ENCODE measurements at regions of chr17 and their contacts with region 1.

Region 1: DNA sequence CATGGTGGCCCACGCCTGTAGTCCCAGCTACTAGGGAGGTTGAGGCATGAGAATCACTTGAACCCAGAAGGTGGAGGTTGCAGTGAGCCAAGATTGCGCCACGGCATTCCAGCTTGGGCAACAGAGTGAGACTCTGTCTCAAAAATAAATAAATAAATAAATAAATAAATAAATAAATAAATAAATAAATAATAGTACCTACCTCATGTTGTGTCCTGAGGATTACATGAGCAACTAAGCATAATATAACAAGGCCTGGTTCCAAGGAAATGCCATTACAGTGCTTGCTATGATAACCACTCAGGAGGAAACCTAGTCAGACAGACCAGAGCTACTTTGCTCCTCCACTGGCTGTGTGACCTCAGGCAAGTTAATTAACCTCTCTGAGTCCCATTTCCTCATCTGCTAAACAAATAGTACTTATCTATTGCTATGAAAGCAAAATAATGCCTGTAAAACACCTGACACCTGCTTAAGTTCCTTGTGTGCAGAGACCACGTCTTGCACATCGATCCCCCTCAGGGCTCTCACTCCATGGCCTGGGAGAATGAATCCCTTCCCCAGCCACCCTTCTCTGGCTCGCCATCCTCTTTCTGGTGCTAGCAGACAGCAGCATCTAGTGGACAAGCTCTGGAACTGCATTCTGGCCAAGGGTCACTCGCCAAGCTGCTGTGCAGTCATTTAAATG is 7.5 kb downstream of the EPOP start:
- DNase-seq: no peak
- H3K4me3 ChIP-seq: no peak overlapping the region
- H3K27ac ChIP-seq: no peak overlapping the region
- H3K4me1 ChIP-seq: no peaks in the 10 kb centered on the region
- H3K27me3 ChIP-seq: no peaks in the 10 kb centered on the region
- CTCF ChIP-seq: peak; percentile 81 to 96 (median 95)
- POLR2A ChIP-seq: no peak

Region 2: DNA sequence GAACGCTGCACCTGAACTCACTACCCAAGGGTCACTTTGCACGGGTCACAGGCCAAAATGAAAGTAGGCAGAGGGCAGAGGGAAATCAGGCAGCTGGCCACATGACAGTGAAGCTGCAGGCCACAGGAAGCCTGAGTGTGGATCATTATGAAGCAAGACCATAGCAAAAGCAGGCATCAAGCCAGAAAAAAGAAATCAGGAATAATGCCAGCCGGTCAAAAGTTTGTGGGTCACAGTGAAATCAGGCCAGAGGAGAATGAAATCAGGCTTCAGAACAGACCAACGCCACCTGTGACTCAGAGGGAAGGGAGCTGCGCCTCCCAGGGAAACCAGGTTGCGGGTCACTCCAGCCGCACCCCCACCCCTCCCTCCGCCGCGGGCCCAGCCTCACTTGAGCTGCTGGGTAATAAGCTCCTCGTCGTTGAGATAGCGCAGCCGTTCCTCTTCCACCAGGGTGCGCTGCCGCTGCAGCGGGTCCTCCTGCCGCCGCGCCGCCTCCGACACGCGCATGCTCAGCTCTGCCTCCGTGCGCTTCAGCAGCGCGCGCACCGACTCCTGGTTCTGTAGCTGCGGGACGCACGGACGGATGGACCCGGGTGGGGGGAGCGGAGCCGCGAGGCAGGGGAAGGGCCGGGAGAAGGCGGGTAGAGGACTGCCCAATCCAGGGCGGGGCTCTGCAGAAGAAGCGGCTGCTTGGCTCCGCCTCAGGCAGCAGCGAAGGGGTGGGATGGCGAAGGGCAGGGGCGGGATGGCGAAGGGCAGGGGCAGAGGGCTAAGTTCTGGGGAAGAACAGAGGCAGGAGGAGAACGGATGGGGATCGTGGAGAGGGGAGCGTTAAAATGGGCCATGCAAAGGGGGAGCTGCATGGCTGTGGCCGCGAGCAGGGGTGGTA is 109.2 kb before region 1 on chr17:
- intact Hi-C with region 1: loop called (anchors 5 kb)
- DNase-seq: peak in 1 of 2 donors; percentile 93
- H3K4me3 ChIP-seq: peak overlapping the region; percentile 52
- H3K27ac ChIP-seq: peak overlapping the region; percentile 69
- H3K4me1 ChIP-seq: peaks cover 31% of the 10 kb centered on the region
- H3K27me3 ChIP-seq: peaks cover 11% of the 10 kb centered on the region
- CTCF ChIP-seq: peak; percentile 78 to 94 (median 80)
- POLR2A ChIP-seq: peak in 1 of 2 donors; percentile 27

Region 3: DNA sequence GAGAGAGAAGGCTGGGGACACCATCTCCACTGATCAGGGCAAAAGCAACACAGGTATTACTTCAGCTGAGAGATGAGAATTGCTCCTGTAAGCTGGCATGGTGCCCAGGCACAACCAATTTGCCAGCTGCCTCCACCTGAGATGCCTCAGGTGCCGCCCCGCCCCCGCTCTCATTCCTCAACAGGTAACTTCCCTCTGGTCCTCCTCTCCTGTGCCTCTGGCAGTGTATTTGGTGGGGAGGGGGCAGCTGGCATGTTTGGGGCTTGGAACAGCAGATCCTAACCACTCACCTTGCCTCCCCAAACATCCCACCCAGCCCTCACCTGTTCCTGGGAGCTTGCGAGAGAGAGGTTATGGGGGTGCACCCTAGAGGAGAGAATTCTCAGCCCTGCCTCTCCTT is 58.6 kb before region 1 on chr17:
- intact Hi-C with region 1: no loop called
- DNase-seq: no peak
- H3K4me3 ChIP-seq: no peak overlapping the region
- H3K27ac ChIP-seq: no peak overlapping the region
- H3K4me1 ChIP-seq: peaks cover 19% of the 10 kb centered on the region
- H3K27me3 ChIP-seq: peaks cover 16% of the 10 kb centered on the region
- CTCF ChIP-seq: no peak
- POLR2A ChIP-seq: no peak

Region 4: DNA sequence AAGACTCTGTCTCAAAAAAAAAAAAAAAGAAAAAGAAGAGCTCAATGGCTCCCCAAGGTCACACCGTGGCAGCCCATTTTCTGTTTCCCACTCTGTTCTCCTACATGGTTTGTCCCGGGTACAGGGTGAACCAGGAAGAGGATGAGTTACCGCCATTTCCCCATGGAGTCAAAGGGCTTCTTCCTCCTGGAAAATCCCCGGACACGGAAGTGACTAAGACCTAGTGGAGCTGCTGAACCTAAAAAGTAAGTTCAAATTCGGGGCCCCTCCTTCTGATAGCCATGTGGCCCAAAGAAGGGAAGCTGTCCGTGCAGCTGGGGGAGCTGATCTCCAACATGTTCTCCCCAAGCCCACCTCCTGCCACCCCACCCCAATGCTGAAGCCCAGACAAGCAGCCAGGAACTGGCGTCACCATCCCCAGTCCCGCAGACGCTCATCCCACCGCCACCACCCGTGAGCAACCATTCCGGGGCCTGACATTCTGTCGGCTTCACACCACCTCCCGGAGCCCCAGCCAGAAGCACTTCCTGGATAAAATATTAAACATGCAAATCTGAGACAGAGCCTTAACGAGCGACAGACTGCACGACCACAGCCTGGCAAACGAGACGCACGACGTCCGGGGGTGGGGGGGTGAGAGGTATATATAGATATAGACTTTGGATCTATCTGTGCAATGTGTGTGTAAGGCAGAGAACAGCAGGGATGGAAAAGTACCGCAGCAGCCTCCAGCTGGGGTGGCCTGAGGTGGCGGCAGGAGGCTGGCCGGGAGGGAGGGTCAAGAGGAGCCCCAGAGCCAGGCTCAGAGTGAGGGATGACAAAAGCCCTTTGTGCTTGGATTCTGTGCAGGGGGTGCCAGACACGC is 10.1 kb before region 1 on chr17:
- intact Hi-C with region 1: no loop called
- DNase-seq: no peak
- H3K4me3 ChIP-seq: no peak overlapping the region
- H3K27ac ChIP-seq: no peak overlapping the region
- H3K4me1 ChIP-seq: no peaks in the 10 kb centered on the region
- H3K27me3 ChIP-seq: peaks cover 6% of the 10 kb centered on the region
- CTCF ChIP-seq: no peak
- POLR2A ChIP-seq: no peak

Region 5: DNA sequence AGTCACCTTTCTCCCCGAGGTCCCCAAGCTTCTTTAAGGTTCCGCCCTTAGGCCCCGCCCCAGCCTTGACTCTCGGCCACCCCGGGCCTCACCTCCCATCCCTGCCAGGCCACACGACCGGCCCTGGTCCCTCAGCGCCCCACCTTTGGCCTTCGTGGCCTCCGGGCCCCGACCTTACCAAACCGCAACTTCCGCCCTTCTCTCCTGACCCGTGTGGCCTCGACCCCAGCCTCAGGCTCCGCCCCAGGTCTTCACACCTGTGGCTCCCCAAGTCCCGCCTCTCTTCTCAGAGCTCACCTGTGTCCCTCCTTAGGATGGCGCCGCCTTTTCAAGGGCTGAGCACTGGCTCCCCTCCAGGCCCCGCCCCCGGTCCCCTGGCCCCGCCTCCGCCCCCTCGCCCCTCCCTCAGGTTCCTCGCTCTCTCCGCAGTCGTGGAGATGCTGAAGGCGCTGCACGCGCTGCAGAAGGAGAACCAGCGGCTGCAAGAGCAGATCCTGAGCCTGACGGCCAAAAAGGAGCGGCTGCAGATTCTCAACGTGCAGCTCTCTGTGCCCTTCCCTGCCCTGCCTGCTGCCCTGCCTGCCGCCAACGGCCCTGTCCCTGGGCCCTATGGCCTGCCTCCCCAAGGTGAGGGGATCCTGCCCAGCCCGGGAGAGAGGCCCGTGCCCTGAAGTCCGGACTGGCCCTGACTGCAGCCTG is 52.8 kb after region 1 on chr17:
- intact Hi-C with region 1: no loop called
- DNase-seq: no peak
- H3K4me3 ChIP-seq: no peak overlapping the region
- H3K27ac ChIP-seq: no peak overlapping the region
- H3K4me1 ChIP-seq: peaks cover 9% of the 10 kb centered on the region
- H3K27me3 ChIP-seq: no peaks in the 10 kb centered on the region
- CTCF ChIP-seq: no peak
- POLR2A ChIP-seq: no peak

Region 6: DNA sequence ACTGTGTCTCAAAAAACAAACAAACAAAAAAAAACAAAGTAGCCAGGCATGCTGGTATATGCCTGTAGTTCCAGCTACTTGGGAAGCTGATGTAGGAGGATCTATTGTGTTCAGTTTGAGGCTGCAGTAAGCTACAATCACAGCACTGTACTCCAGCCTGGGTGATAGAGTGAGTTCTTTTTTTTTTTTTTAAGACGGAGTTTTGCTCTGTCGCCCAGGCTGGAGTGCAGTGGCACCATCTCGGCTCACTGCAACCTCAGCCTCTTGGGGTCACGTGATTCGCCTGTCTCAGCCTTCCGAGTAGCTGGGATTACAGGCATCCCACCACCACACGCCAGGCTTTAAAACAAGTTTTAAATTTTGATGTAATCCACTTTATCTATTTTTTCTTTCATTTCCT is 638.7 kb after region 1 on chr17:
- intact Hi-C with region 1: no loop called
- DNase-seq: no peak
- H3K4me3 ChIP-seq: no peak overlapping the region
- H3K27ac ChIP-seq: no peak overlapping the region
- H3K4me1 ChIP-seq: no peaks in the 10 kb centered on the region
- H3K27me3 ChIP-seq: no peaks in the 10 kb centered on the region
- CTCF ChIP-seq: no peak
- POLR2A ChIP-seq: no peak

Measured in vagina (tissue), 2 donors.